ENCODE measurements at regions of chr6 and their contacts with region 1.

Region 1: DNA sequence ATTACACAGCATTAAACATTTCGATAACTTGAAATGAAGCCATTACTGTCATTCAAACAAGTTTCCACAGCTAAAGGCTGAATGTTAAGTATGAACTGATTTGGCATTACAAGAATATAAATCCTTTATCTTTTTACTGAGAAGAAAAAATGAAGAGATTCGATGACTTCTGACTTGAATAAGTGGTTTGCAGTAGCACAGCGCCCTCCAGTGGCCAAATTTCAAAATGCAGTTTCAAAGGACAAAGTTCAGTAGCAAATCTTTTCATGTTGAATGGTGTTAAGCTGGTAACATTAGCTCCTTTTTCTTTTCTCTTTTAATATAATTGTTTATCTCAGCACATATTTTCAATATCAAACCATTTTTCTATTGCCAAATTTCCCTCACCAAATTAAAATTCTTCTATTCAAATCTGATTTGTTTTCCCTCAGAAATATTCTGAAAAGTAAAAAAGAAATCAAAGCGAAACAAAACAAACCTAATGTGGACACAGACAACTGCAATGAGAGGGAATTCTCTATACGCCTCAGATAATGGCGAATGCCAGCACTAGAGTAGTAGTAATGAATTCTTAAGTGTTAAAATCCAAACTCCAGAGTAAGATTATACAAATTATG is 145.7 kb downstream of the BTBD9 start:
- DNase-seq: peak; percentile 85 to 90
- H3K4me3 ChIP-seq: no peak overlapping the region
- H3K27ac ChIP-seq: no peak overlapping the region
- H3K4me1 ChIP-seq: peaks cover 0 to 4% (median 2%) of the 10 kb centered on the region in 4 donors
- H3K27me3 ChIP-seq: no peaks in the 10 kb centered on the region
- CTCF ChIP-seq: peak in 5 of 7 experiments; percentile 80 to 97 (median 84)
- EP300 ChIP-seq: no peak
- POLR2A ChIP-seq: no peak

Region 2: DNA sequence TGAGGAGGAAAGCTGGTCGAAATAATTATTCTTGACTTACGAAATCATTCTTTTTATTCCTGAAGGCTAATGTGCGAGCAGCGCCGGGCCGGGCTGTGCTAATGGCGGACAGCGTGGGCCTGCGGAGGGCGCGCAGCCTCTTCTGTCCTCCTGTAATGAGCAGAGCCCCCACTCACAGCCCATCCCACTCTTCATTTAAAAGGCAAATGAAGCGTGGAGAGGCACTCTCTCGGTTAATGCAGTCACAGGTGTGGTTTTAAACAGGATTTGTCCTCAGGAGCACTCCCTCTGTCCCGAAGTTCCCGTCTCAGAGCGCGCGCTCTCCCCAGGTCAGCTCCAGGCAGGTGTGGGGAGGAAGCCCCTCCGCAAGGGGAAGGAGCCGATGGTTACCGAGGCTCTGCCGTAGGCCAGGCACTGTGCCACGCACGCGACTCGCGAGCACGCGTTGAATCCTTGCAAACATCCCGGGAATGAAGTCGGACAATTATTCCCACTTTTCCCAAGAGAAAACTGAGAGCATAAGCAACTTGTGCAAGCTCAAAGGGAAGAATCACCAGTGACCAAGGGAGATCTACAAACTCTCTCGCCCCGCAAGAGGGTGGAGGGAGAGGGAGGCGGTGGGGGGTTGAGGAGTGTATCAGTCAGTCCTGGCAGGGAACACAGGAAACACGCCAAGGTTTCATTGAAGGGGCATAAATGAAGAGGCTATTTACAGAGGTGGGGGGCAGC is 710.0 kb before region 1 on chr6:
- intact Hi-C with region 1: loop called (anchors 10 kb)
- DNase-seq: peak; percentile 28 to 75
- H3K4me3 ChIP-seq: peak overlapping the region; percentile 44 to 62 (median 46)
- H3K27ac ChIP-seq: peak overlapping the region in 4 of 5 donors; percentile 1 to 71 (median 29)
- H3K4me1 ChIP-seq: peaks cover 17 to 23% (median 23%) of the 10 kb centered on the region in 4 donors
- H3K27me3 ChIP-seq: peaks cover 0 to 30% (median 0%) of the 10 kb centered on the region in 3 donors
- CTCF ChIP-seq: no peak
- EP300 ChIP-seq: no peak
- POLR2A ChIP-seq: no peak

Region 3: DNA sequence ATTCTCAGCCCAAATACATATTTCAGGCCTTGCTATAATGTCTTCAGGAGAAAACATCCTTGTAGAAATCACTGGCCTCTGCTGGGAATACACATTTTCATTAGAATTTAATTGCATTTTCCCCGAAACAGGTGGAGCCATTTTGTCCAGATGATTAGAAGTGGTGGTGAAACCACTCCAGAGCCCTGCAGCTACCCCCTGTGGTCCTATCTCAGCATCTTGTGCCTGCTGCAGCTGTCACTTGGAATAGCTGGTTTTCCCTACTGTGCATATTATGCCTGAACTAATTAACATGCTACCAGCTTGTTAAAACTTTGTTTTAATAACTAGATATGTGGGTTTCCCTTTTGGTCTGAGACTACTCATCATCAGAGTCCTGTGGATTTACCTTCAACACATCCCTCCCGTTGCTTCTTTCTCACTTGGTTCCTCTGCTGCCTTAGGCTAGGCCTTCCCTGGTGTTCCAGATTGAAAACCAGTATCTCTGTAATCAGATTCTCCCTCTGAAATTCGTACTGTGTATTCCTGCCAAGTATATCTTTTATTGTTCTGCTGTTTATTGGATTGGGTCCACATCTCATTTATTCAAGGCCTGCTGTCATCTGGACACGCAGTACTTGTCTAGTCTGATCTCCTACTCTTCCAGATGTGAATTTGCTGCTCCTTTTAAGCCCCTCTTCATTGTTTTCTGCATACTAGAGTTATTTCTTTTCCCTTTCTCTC is 236.3 kb after region 1 on chr6:
- intact Hi-C with region 1: no loop called
- DNase-seq: peak in 1 of 2 donors; percentile 50
- H3K4me3 ChIP-seq: no peak overlapping the region
- H3K27ac ChIP-seq: no peak overlapping the region
- H3K4me1 ChIP-seq: no peaks in the 10 kb centered on the region
- H3K27me3 ChIP-seq: no peaks in the 10 kb centered on the region
- CTCF ChIP-seq: no peak
- EP300 ChIP-seq: no peak
- POLR2A ChIP-seq: no peak

Measured in stomach (tissue), 19 donors.